Caco-2 (cell line): ENCODE measurements at regions of chr3 and their contacts with region 1.

Region 1: GRCh38 chr3:98962189-98962930 is 60.9 kb upstream of the DCBLD2 start:
- DNase-seq: no peak
- H3K4me3 ChIP-seq: no peak overlapping the region
- H3K4me3 Mint-ChIP-seq: no peak overlapping the region
- H3K27ac Mint-ChIP-seq: no peak overlapping the region
- H3K4me1 ChIP-seq: no peaks in the 10 kb centered on the region
- H3K4me1 Mint-ChIP-seq: no peaks in the 10 kb centered on the region
- H3K27me3 ChIP-seq: no peaks in the 10 kb centered on the region
- H3K27me3 Mint-ChIP-seq: no peaks in the 10 kb centered on the region
- CTCF ChIP-seq: no peak

Region 2: GRCh38 chr3:98977520-98977919 is 15.2 kb after region 1 on chr3:
- CTCF ChIA-PET with region 1: no interaction called
- POLR2A ChIA-PET with region 1: no interaction called
- intact Hi-C with region 1: loop called (anchors 2 kb)
- DNase-seq: no peak
- H3K4me3 ChIP-seq: no peak overlapping the region
- H3K4me3 Mint-ChIP-seq: no peak overlapping the region
- H3K27ac Mint-ChIP-seq: no peak overlapping the region
- H3K4me1 ChIP-seq: no peaks in the 10 kb centered on the region
- H3K4me1 Mint-ChIP-seq: no peaks in the 10 kb centered on the region
- H3K27me3 ChIP-seq: no peaks in the 10 kb centered on the region
- H3K27me3 Mint-ChIP-seq: peaks cover 3% of the 10 kb centered on the region
- CTCF ChIP-seq: no peak